ENCODE measurements at regions of chr12 and their contacts with region 1.

Region 1: GRCh38 chr12:6230321-6231110 is 30.3 kb downstream of the CD9 start:
- DNase-seq: peak; percentile 65
- H3K4me3 Mint-ChIP-seq: peak overlapping the region; percentile 68
- H3K27ac Mint-ChIP-seq: peak overlapping the region; percentile 98
- H3K4me1 Mint-ChIP-seq: peaks cover 44% of the 10 kb centered on the region
- H3K27me3 Mint-ChIP-seq: no peaks in the 10 kb centered on the region
- CTCF ChIP-seq: no peak

Region 2: DNA sequence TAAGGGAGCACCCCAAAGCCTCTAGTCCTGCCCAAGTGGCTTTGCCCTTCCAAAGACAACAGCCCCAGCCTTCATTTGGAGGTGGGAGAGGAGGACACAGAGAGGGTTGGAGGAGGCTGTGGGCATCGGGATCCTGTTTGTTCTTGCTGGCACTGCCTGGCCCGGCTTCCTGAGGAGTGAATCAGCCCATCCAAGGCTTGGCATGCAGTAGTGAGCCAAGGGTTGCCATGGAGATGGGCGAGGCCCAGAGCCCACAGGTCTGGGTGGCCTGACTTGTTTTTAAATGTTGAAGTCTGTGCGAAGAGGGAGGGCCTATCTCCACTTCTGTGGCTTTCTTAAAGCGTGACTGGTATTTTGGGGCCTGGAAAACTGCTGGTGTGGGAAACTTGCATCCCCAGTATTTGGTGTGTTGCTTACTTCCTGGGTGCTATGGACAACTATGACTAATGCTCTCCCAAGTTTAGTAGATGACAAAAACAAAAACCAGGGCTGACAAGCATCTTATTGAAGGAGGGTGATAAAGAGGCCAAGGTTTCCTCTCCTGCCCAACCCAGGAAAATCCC is 14.5 kb before region 1 on chr12:
- CTCF ChIA-PET with region 1: interaction called, 67 read pairs
- POLR2A ChIA-PET with region 1: interaction called, 152 read pairs
- intact Hi-C with region 1: no loop called
- DNase-seq: peak; percentile 99
- H3K4me3 Mint-ChIP-seq: peak overlapping the region; percentile 59
- H3K27ac Mint-ChIP-seq: peak overlapping the region; percentile 100
- H3K4me1 Mint-ChIP-seq: peaks cover 44% of the 10 kb centered on the region
- H3K27me3 Mint-ChIP-seq: no peaks in the 10 kb centered on the region
- CTCF ChIP-seq: no peak

Region 3: GRCh38 chr12:6241495-6241894 is 11.0 kb after region 1 on chr12:
- CTCF ChIA-PET with region 1: interaction called, 9 read pairs
- POLR2A ChIA-PET with region 1: interaction called, 15 read pairs
- intact Hi-C with region 1: no loop called
- DNase-seq: peak; percentile 45
- H3K4me3 Mint-ChIP-seq: no peak overlapping the region
- H3K27ac Mint-ChIP-seq: no peak overlapping the region
- H3K4me1 Mint-ChIP-seq: no peaks in the 10 kb centered on the region
- H3K27me3 Mint-ChIP-seq: no peaks in the 10 kb centered on the region
- CTCF ChIP-seq: no peak

Measured in MCF 10A (cell line).